ENCODE measurements at regions of chr11 and their contacts with region 1.

Region 1: DNA sequence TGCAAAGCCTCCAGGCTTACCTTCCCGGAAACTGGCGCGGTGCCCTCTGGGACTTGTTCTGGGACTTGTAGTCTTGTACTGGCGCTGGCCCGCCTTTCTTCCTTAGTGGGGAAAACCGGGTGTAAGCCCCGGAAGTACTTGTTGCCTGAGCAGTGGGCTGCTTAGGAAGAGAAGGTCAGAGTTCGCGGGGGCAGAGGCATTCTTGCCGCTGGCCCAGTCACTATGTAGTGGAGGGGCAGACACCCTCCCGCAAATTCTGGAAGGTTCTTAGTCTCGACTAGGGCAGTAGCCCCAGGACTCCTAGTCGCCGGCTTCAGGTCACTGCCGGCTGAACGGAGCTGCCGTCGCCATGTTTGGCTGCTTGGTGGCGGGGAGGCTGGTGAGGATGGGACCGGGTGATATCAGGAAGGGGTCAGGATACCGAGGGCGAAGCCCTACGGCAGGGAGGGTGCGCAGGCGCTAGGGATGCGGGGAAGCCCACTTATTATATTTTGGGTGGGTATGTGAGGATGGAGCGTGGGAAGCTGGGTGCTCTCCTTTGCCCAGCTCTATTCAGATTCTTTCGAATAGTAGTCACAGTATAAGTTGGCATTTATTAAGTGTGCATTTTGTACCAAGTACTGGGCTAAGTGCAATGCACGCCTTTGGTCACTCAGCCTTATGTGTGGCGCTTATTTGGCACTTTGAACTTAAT is at the start of gene HIKESHI:
- DNase-seq: peak; percentile 83 to 95 (median 84)
- H3K4me3 ChIP-seq: peak within 1 kb of the TSS; percentile 54 to 85
- H3K4me3 Mint-ChIP-seq: peak within 1 kb of the TSS; percentile 94 to 100 (median 100)
- H3K27ac ChIP-seq: peak within 1 kb of the TSS; percentile 87
- H3K27ac Mint-ChIP-seq: peak within 1 kb of the TSS; percentile 93 to 100 (median 99)
- H3K4me1 ChIP-seq: peaks cover 24% of the 10 kb centered on the region
- H3K4me1 Mint-ChIP-seq: peaks cover 12 to 29% (median 23%) of the 10 kb centered on the region in 4 donors
- H3K27me3 ChIP-seq: no peaks in the 10 kb centered on the region
- H3K27me3 Mint-ChIP-seq: peaks cover 0 to 1% of the 10 kb centered on the region in 2 donors
- total RNA-seq, gene HIKESHI: 26.6 to 33.3 TPM

Region 2: DNA sequence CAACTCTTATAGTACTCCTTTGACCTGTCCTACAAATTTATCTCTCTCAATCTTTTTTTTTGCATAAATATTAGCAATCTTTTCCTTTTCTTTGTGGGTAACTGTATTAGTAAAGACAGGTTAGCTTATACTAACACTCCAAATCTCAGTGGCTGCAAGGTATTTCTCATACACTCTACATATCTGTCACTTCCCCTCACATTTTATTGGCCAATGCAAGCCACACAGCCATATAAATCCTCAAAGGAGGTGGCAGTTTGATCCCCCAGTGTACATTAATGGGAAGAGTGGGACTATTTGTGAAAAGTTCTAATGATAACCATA is 100.3 kb before region 1 on chr11:
- CTCF ChIA-PET with region 1: no interaction called
- POLR2A ChIA-PET with region 1: no interaction called
- intact Hi-C with region 1: no loop called
- DNase-seq: peak in 1 of 5 donors; percentile 8
- H3K4me3 ChIP-seq: peak overlapping the region; percentile 44 to 55
- H3K4me3 Mint-ChIP-seq: no peak overlapping the region
- H3K27ac ChIP-seq: peak overlapping the region; percentile 52
- H3K27ac Mint-ChIP-seq: no peak overlapping the region
- H3K4me1 ChIP-seq: peaks cover 15% of the 10 kb centered on the region
- H3K4me1 Mint-ChIP-seq: no peaks in the 10 kb centered on the region
- H3K27me3 ChIP-seq: no peaks in the 10 kb centered on the region
- H3K27me3 Mint-ChIP-seq: no peaks in the 10 kb centered on the region

Region 3: GRCh38 chr11:86244522-86245368 is 57.5 kb before region 1 on chr11 and contains the start of gene EED:
- CTCF ChIA-PET with region 1: no interaction called
- POLR2A ChIA-PET with region 1: interaction called, 12 read pairs
- intact Hi-C with region 1: loop called (anchors 1 kb)
- DNase-seq: peak; percentile 92 to 96 (median 93)
- H3K4me3 ChIP-seq: peak within 1 kb of the TSS; percentile 98 to 99
- H3K4me3 Mint-ChIP-seq: no peak within 1 kb of the TSS
- H3K27ac ChIP-seq: peak within 1 kb of the TSS; percentile 99
- H3K27ac Mint-ChIP-seq: no peak within 1 kb of the TSS
- H3K4me1 ChIP-seq: peaks cover 54% of the 10 kb centered on the region
- H3K4me1 Mint-ChIP-seq: peaks cover 0 to 35% (median 13%) of the 10 kb centered on the region in 4 donors
- H3K27me3 ChIP-seq: no peaks in the 10 kb centered on the region
- H3K27me3 Mint-ChIP-seq: peaks cover 0 to 2% of the 10 kb centered on the region in 2 donors
- total RNA-seq, gene EED: 47.1 to 51.0 TPM

Region 4: DNA sequence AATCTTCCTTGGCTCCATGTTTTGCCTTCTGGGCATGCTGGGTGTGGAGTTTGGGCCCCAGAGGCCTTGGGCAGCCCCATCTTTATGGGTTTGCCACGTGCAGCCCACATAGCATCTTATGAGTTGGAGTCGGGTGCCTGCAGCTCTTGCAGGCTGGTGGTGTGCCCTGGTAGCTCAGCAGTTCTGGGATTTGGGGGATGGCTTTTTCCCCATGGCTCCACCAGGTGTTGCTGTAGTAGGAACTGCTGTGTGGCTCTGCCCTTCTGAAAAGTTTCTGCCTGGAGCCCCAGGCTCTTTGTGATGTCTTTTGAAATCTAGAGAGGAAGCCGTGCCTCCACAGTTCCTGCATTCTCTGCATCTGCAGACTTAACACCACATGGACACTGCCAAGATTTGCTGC is 40.9 kb before region 1 on chr11:
- CTCF ChIA-PET with region 1: no interaction called
- POLR2A ChIA-PET with region 1: no interaction called
- intact Hi-C with region 1: no loop called
- DNase-seq: no peak
- H3K4me3 ChIP-seq: no peak overlapping the region
- H3K4me3 Mint-ChIP-seq: no peak overlapping the region
- H3K27ac ChIP-seq: no peak overlapping the region
- H3K27ac Mint-ChIP-seq: peak overlapping the region in 3 of 7 donors; percentile 19 to 47 (median 29)
- H3K4me1 ChIP-seq: no peaks in the 10 kb centered on the region
- H3K4me1 Mint-ChIP-seq: peaks cover 0 to 19% (median 3%) of the 10 kb centered on the region in 4 donors
- H3K27me3 ChIP-seq: no peaks in the 10 kb centered on the region
- H3K27me3 Mint-ChIP-seq: no peaks in the 10 kb centered on the region

Region 5: DNA sequence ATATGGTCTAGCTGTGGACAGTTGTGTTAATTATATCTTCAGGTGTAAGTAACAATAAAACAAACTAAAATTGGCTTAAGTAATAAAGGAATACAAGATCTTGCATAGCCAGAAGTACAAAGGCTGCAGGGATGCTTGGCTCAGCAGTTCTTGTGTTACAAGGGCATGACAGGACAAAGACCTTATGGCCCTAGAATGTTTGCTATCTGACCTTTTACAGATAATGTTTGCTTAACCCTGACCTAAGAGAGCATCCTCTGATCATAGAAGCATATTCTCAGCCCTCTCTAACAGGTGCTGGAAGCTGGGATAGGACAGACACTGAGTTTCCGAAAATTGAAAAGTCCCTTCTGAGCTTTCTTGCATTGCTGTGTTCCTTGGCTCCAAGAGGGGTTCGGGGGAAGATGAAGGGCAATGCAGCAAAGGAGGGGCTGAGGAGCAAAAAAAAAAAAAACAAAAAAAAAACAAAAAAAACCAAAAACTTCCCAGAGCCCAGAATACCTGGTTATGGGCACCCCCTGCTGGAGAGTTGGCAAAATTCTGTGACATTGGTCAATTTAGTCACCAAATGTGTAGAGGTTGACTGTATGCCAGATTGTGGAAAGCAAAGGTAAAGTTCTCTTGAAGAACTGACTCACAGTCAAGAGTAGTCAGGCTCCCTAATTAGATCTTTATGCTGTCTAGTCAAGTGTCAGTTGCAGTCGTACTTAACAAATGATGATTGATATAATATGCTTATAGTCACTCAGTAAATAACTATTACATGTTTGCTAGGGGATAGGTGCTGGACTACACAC is 10.6 kb before region 1 on chr11:
- CTCF ChIA-PET with region 1: interaction called, 17 read pairs
- POLR2A ChIA-PET with region 1: interaction called, 5 read pairs
- intact Hi-C with region 1: loop called (anchors 1 kb)
- DNase-seq: peak; percentile 49 to 62 (median 55)
- H3K4me3 ChIP-seq: no peak overlapping the region
- H3K4me3 Mint-ChIP-seq: no peak overlapping the region
- H3K27ac ChIP-seq: no peak overlapping the region
- H3K27ac Mint-ChIP-seq: peak overlapping the region in 6 of 7 donors; percentile 1 to 78 (median 50)
- H3K4me1 ChIP-seq: peaks cover 60% of the 10 kb centered on the region
- H3K4me1 Mint-ChIP-seq: peaks cover 22 to 50% (median 34%) of the 10 kb centered on the region in 4 donors
- H3K27me3 ChIP-seq: no peaks in the 10 kb centered on the region
- H3K27me3 Mint-ChIP-seq: no peaks in the 10 kb centered on the region

Measured in CD4-positive, alpha-beta memory T cell (primary cell).